ENCODE measurements at regions of chr2 and their contacts with region 1.

Region 1: DNA sequence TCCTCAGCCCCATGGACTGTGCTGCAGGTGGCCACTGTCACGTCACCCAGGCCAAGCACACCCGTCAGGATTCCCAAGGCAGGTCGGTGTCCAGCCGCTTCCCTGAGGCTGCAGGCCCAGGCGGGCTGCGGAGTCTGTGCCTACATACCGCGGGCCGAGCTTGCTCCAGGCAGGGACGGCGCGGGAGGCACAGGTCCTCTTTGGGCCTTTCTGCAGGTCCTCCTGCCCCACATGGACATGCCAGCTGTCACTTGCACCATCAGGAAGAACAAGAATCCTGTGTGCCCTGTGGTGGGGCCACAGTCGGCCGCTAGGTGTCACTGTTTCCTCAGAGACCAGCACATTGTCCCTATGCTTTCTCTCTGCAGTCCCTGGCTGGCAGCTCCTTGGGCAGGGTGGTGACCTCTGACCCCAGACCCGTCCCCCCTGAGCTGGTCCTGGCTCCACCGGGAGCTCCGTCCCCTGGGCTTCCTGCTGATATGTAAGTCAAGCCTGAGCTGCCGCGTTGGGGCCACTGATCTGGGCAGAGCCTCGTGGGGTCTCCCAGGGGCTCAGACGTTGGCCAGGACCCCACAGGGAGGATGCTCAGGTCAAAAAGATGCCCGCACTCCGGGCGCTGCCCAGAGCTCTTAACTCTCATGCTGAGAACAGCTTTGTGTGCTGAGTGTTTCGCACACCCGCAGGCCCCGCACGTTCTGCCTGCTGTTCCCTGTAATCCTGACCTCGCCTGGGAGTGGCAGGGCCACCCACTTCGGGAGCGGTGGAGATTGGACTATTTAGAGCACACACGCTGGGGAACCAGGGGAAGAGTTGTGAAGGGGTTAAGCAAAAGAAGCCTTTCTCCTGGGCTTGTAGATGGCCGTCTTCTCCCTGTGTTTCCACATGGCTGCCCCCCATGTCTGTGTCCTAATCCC is 17.3 kb upstream of the AGXT start:
- DNase-seq: peak; percentile 85
- ATAC-seq: peak; percentile 94 to 95

Region 2: DNA sequence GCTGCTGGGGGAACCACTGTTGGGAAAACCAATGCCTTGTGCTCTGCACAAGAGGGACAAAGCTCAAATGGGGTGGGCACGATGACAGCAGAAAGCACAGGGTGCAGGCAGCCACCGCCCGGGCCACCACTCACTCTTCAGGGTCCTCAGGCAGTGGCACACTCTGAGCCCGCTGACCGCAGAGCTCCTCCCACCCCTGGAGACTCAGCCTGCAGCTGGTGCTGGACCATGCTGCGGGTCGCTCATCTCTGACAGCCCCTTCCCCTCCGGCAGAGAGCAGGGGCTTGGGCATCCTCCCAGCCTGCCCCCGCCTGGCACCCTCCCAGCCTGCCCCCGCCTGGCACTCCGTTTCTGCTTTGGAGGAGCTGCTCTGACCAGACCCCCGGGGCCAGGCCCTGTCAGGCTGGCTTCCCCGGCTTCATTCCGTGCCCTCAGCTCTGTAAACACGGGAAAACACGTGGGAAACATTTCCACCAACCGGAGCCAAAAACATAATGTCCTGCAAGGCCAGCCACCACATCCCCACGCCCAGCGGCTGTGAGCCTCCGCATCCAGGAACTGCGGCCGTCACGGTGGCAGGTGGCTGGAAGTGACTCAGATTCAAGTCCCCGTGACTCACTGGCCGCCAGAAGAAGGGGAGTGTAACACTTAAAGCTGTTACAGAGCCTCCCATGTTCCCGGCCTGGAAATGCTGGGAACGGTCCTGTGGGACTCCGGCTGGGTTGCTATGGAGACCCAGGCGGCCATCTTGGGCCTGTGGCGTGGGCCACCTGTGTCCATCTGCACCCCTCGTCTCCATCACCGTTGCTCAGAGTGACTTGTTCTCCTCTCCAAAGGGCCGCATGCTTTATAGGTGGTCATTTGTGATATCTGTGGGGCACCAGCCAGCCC is 140.3 kb after region 1 on chr2:
- intact Hi-C with region 1: loop called in 1 of 2 experiments (anchors 5 kb)
- DNase-seq: peak; percentile 93
- ATAC-seq: peak; percentile 60 to 75

Region 3: DNA sequence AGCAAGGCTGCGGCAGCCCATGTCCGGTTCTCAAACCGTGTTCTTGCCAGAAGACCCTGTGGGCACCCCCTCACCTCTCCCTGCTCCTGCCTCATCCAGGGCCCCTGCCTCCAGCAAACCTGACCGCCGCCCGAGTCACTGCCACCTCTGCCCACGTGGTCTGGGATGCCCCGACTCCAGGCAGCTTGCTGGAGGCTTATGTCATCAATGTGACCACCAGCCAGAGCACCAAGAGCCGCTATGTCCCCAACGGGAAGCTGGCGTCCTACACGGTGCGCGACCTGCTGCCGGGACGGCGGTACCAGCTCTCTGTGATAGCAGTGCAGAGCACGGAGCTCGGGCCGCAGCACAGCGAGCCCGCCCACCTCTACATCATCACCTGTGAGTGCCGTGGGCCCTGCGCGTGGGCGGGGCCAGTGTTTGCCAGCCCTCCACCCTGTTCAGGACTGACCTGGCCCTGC is 218.5 kb after region 1 on chr2:
- intact Hi-C with region 1: loop called in 1 of 2 experiments (anchors 10 kb)
- DNase-seq: peak; percentile 14
- ATAC-seq: no peak